ENCODE measurements at regions of chr11 and their contacts with region 1.

Region 1: GRCh38 chr11:113113801-113114706 is 152.8 kb downstream of the NCAM1 start:
- DNase-seq: peak; percentile 49 to 64
- H3K4me3 ChIP-seq: no peak overlapping the region
- H3K27ac ChIP-seq: no peak overlapping the region
- H3K4me1 ChIP-seq: no peaks in the 10 kb centered on the region
- H3K27me3 ChIP-seq: no peaks in the 10 kb centered on the region
- CTCF ChIP-seq: peak; percentile 81

Region 2: GRCh38 chr11:112588252-112588694 is 525.8 kb before region 1 on chr11:
- CTCF ChIA-PET with region 1: interaction called, 11 read pairs
- POLR2A ChIA-PET with region 1: no interaction called
- intact Hi-C with region 1: loop called (anchors 5 kb)
- DNase-seq: peak; percentile 20 to 76
- H3K4me3 ChIP-seq: no peak overlapping the region
- H3K27ac ChIP-seq: no peak overlapping the region
- H3K4me1 ChIP-seq: peaks cover 5% of the 10 kb centered on the region; the same call in 1 of the 2 replicates
- H3K27me3 ChIP-seq: no peaks in the 10 kb centered on the region
- CTCF ChIP-seq: peak; percentile 91

Region 3: DNA sequence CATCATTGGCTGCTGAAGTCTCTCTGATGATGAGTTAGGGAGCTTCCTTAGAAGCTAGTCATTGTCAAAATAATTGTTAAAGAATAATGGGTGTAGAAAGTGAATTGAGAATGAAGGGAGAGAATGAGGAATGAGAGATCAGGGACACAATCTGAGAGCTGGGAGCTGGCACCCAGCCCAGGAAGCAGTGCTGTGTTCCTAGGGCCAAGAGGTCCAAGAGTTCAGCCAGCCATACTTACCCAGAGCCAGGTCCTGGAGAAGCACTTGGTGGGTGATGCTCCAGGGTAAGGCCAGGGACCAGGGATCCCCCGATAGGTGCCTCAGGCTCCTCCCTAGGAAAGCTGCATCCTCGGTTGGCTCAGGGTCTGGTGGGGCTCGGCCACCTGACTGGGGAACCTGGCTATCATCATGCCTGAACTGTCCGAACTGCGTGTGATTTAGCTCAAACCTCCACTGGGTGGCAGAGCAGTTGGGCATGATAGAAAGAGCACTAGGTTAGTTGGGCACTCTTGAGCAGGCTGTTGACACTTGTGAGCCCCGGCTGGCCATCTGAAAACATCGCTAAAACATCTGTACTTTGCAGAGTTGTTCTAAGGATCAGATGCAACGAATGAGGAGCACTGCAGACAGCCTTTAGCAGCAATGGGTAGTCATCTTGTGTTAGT is 276.8 kb before region 1 on chr11:
- CTCF ChIA-PET with region 1: no interaction called
- POLR2A ChIA-PET with region 1: no interaction called
- intact Hi-C with region 1: loop called (anchors 5 kb)
- DNase-seq: no peak
- H3K4me3 ChIP-seq: no peak overlapping the region
- H3K27ac ChIP-seq: no peak overlapping the region
- H3K4me1 ChIP-seq: no peaks in the 10 kb centered on the region
- H3K27me3 ChIP-seq: no peaks in the 10 kb centered on the region
- CTCF ChIP-seq: 0 out of 2 replicates have a peak, but pooled peaks have one; percentile 24

Region 4: DNA sequence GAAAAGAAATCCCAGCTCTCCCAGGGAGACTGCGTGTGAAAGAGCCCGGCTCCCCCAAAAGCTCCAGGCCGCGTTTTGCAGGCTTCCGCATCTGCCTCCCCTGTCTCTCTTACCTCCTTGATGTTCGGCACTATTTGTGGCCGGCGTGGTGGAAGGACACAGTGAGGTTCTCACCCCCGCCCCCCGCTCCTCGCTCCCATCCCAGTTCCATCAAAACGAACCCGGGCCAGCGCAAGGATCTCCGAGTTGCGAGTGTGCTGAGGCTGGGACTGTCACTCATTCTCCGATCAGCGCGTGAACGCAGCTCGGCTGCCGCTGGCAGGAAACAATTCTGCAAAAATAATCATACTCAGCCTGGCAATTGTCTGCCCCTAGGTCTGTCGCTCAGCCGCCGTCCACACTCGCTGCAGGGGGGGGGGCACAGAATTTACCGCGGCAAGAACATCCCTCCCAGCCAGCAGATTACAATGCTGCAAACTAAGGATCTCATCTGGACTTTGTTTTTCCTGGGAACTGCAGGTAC is 152.8 kb before region 1 on chr11 and contains the start of gene NCAM1:
- CTCF ChIA-PET with region 1: no interaction called
- POLR2A ChIA-PET with region 1: no interaction called
- intact Hi-C with region 1: loop called (anchors 5 kb)
- DNase-seq: peak; percentile 18 to 66
- H3K4me3 ChIP-seq: peak within 1 kb of the TSS; percentile 54
- H3K27ac ChIP-seq: no peak within 1 kb of the TSS
- H3K4me1 ChIP-seq: no peaks in the 10 kb centered on the region
- H3K27me3 ChIP-seq: no peaks in the 10 kb centered on the region
- CTCF ChIP-seq: no peak
- total RNA-seq, gene NCAM1: 0.33 and 1.0 TPM in 2 replicates

Region 5: GRCh38 chr11:112995423-112996090 is 118.5 kb before region 1 on chr11:
- CTCF ChIA-PET with region 1: no interaction called
- POLR2A ChIA-PET with region 1: no interaction called
- intact Hi-C with region 1: no loop called
- DNase-seq: no peak
- H3K4me3 ChIP-seq: no peak overlapping the region
- H3K27ac ChIP-seq: no peak overlapping the region
- H3K4me1 ChIP-seq: no peaks in the 10 kb centered on the region
- H3K27me3 ChIP-seq: peaks cover 10% of the 10 kb centered on the region; the same call in 1 of the 2 replicates
- CTCF ChIP-seq: no peak

Region 6: DNA sequence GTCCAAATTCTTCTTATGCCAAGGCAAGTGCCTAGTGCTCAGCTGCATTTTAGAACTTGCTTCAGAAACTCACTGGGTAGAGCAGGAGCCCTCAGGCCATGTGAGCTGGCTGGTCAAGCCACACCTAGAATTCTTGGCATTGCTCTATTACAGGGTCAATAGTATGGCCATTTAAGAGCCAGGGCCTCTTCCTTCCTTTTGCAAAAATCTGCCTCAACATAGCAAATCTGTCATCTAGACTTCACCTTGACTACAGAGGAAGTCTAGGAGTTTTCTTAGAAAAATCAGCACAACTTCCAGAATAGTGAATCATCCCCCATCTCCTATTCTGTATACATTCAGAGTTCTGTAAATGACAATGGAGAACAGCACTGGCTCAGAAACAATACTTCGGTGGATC is 88.4 kb after region 1 on chr11:
- CTCF ChIA-PET with region 1: no interaction called
- POLR2A ChIA-PET with region 1: no interaction called
- intact Hi-C with region 1: loop called (anchors 2 kb)
- DNase-seq: peak; percentile 76 to 97
- H3K4me3 ChIP-seq: no peak overlapping the region
- H3K27ac ChIP-seq: peak overlapping the region; percentile 86
- H3K4me1 ChIP-seq: peaks cover 55% of the 10 kb centered on the region
- H3K27me3 ChIP-seq: no peaks in the 10 kb centered on the region
- CTCF ChIP-seq: no peak

Region 7: GRCh38 chr11:113289431-113290187 is 175.6 kb after region 1 on chr11:
- CTCF ChIA-PET with region 1: interaction called, 3 read pairs
- POLR2A ChIA-PET with region 1: no interaction called
- intact Hi-C with region 1: loop called (anchors 1 kb)
- DNase-seq: peak in 1 of 2 experiments; percentile 55
- H3K4me3 ChIP-seq: no peak overlapping the region
- H3K27ac ChIP-seq: no peak overlapping the region
- H3K4me1 ChIP-seq: peaks cover 15% of the 10 kb centered on the region
- H3K27me3 ChIP-seq: no peaks in the 10 kb centered on the region; the same call in none of the 2 replicates
- CTCF ChIP-seq: peak; percentile 98

Measured in PC-9 (cell line).